Activated B cell treated with CpG ODN at 0.5 μM for 24 hours (primary cell): ENCODE measurements at regions of chr15 and their contacts with region 1.

Region 1: DNA sequence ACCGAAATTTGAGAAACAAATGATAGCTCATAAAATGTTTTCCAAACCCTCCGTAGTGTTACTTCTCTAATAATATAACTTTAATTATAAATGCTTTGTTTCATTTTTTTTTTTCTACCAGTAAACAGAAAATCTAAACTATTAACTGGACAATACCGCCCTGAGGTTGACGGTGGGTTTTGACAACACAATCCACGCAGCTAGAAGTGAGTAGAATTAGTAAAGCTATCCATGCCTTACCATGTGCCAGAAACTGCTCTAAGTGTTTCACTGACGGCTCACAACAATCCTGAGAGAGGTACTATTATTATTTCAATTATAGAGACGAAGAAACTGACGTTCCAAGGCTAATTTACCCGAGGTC is 410 bp downstream of the NDUFAF1 start:
- DNase-seq: no peak
- ATAC-seq: no peak
- H3K4me3 Mint-ChIP-seq: peak overlapping the region; percentile 93
- H3K27ac Mint-ChIP-seq: peak overlapping the region; percentile 94
- H3K4me1 Mint-ChIP-seq: peaks cover 16% of the 10 kb centered on the region
- H3K27me3 Mint-ChIP-seq: no peaks in the 10 kb centered on the region
- CTCF ChIP-seq: no peak

Region 2: DNA sequence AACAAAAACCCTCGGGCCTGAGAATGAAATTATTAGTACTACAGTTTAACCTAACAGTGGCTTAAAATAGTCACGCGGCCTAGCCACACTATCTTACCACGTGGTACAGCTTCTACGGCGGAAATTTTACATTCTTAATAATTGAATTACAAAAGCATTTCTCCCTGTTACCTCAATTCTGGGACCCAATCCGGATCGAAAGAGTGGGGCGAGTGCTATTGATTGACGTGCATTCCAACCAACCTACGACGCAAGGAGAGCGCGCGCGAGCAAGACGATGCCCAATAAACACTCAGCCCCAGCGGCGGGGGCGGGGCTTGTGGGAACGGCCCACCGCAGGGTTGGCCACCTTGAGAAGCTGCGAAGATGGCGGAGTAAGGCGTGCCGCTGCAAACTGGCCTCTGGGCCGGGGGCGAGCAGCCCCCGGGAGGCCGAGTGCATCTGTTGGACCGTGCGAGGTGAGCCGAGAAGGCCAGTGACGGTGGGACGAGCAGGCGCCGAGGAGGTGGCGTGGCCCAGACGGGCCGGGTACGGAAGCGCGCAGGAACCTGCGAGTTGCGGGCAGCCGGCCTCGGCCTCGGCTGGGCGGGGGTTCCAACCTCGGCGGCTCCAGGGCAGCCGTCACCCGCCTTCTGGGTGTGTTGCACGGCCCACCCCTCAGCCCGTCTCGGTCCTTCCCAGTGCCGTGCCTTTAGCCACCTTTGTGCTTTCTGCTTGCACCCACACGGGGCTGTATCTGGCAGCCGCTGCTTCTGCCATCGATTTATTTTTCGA is 118.0 kb before region 1 on chr15:
- CTCF ChIA-PET with region 1: no interaction called
- POLR2A ChIA-PET with region 1: interaction called, 3 read pairs
- intact Hi-C with region 1: loop called (anchors 2 kb)
- DNase-seq: peak; percentile 94
- ATAC-seq: peak; percentile 98
- H3K4me3 Mint-ChIP-seq: peak overlapping the region; percentile 93
- H3K27ac Mint-ChIP-seq: peak overlapping the region; percentile 94
- H3K4me1 Mint-ChIP-seq: peaks cover 42% of the 10 kb centered on the region
- H3K27me3 Mint-ChIP-seq: no peaks in the 10 kb centered on the region
- CTCF ChIP-seq: no peak

Region 3: GRCh38 chr15:41309226-41309905 is 92.5 kb before region 1 on chr15:
- CTCF ChIA-PET with region 1: no interaction called
- POLR2A ChIA-PET with region 1: no interaction called
- intact Hi-C with region 1: no loop called
- DNase-seq: no peak
- ATAC-seq: no peak
- H3K4me3 Mint-ChIP-seq: no peak overlapping the region
- H3K27ac Mint-ChIP-seq: no peak overlapping the region
- H3K4me1 Mint-ChIP-seq: peaks cover 8% of the 10 kb centered on the region
- H3K27me3 Mint-ChIP-seq: no peaks in the 10 kb centered on the region
- CTCF ChIP-seq: no peak

Region 4: GRCh38 chr15:41416742-41417406 is 15.0 kb after region 1 on chr15 and contains the start of gene RTF1:
- CTCF ChIA-PET with region 1: no interaction called
- POLR2A ChIA-PET with region 1: interaction called, 3 read pairs
- intact Hi-C with region 1: loop called (anchors 1 kb)
- DNase-seq: peak; percentile 100
- ATAC-seq: peak; percentile 96
- H3K4me3 Mint-ChIP-seq: peak within 1 kb of the TSS; percentile 95
- H3K27ac Mint-ChIP-seq: peak within 1 kb of the TSS; percentile 92
- H3K4me1 Mint-ChIP-seq: peaks cover 43% of the 10 kb centered on the region
- H3K27me3 Mint-ChIP-seq: no peaks in the 10 kb centered on the region
- CTCF ChIP-seq: no peak
- total RNA-seq, gene RTF1: 37.2 and 38.0 TPM in 2 replicates

Region 5: GRCh38 chr15:41476416-41477048 is 74.6 kb after region 1 on chr15:
- CTCF ChIA-PET with region 1: no interaction called
- POLR2A ChIA-PET with region 1: no interaction called
- intact Hi-C with region 1: no loop called
- DNase-seq: no peak
- ATAC-seq: no peak
- H3K4me3 Mint-ChIP-seq: no peak overlapping the region
- H3K27ac Mint-ChIP-seq: no peak overlapping the region
- H3K4me1 Mint-ChIP-seq: no peaks in the 10 kb centered on the region
- H3K27me3 Mint-ChIP-seq: no peaks in the 10 kb centered on the region
- CTCF ChIP-seq: no peak